Mammary epithelial cell (primary cell): ENCODE measurements at regions of chr12 and their contacts with region 1.

Region 1: GRCh38 chr12:19129486-19130223 is at the start of gene PLEKHA5:
- DNase-seq: peak; percentile 63
- H3K4me3 ChIP-seq: peak within 1 kb of the TSS; percentile 66 to 96 (median 67)
- H3K27ac ChIP-seq: peak within 1 kb of the TSS; percentile 78
- H3K4me1 ChIP-seq: peaks cover 13% of the 10 kb centered on the region
- H3K27me3 ChIP-seq: no peaks in the 10 kb centered on the region
- CTCF ChIP-seq: peak in 1 of 2 donors; percentile 55
- total RNA-seq, gene PLEKHA5: 54.3 to 76.5 TPM

Region 2: GRCh38 chr12:18261253-18261652 is 868.4 kb before region 1 on chr12 and contains the start of gene PIK3C2G:
- CTCF ChIA-PET with region 1: no interaction called
- dilution Hi-C with region 1: no loop called
- in situ Hi-C with region 1: no loop called
- intact Hi-C with region 1: loop called (anchors 10 kb)
- DNase-seq: peak; percentile 62
- H3K4me3 ChIP-seq: peak within 1 kb of the TSS; percentile 45 to 99 (median 66)
- H3K27ac ChIP-seq: peak within 1 kb of the TSS; percentile 97
- H3K4me1 ChIP-seq: peaks cover 7% of the 10 kb centered on the region
- H3K27me3 ChIP-seq: no peaks in the 10 kb centered on the region
- CTCF ChIP-seq: no peak
- total RNA-seq, gene PIK3C2G: 8.6 to 18.2 TPM

Region 3: GRCh38 chr12:18861287-18861858 is 268.3 kb before region 1 on chr12:
- CTCF ChIA-PET with region 1: interaction called, 3 read pairs
- dilution Hi-C with region 1: no loop called
- in situ Hi-C with region 1: loop called in 1 of 2 experiments (anchors 25 kb)
- intact Hi-C with region 1: loop called (anchors 1 kb)
- DNase-seq: peak; percentile 26
- H3K4me3 ChIP-seq: no peak overlapping the region
- H3K27ac ChIP-seq: no peak overlapping the region
- H3K4me1 ChIP-seq: peaks cover 15% of the 10 kb centered on the region
- H3K27me3 ChIP-seq: no peaks in the 10 kb centered on the region
- CTCF ChIP-seq: peak; percentile 56 to 76

Region 4: DNA sequence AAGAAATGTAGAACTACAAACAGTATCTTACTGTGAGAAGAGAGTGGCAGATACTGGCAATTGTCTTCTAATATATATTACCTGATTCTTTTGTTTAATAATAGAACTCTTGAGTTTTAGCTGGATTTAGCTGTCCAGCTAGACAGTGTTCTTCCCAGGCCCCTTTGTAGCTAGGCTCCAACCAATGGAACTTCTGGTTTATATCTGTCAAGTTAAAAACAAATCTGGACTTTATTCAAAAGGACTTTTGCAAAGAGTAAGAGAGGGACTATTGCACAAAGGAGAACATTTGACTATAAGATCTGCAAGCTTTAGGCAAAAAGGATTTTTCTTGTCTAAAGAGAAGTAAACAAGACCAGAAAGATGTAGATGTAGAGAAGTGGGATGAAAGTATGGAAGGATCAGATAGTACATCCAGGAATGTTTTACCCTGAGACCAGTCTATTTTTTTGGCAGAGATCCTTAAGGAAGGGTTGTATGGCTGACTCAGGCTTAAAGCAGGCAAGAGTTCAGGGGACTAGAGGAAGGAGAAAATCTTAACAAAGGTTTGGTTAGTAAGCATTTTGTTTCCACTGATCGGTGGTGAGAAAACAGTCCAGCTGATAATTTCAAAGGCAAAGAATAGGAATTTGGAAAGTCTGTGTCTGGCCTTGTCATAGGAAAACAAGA is 111.2 kb before region 1 on chr12:
- CTCF ChIA-PET with region 1: no interaction called
- dilution Hi-C with region 1: no loop called
- in situ Hi-C with region 1: no loop called
- intact Hi-C with region 1: loop called (anchors 5 kb)
- DNase-seq: peak; percentile 75
- H3K4me3 ChIP-seq: no peak overlapping the region
- H3K27ac ChIP-seq: peak overlapping the region; percentile 79
- H3K4me1 ChIP-seq: peaks cover 32% of the 10 kb centered on the region
- H3K27me3 ChIP-seq: no peaks in the 10 kb centered on the region
- CTCF ChIP-seq: no peak

Region 5: DNA sequence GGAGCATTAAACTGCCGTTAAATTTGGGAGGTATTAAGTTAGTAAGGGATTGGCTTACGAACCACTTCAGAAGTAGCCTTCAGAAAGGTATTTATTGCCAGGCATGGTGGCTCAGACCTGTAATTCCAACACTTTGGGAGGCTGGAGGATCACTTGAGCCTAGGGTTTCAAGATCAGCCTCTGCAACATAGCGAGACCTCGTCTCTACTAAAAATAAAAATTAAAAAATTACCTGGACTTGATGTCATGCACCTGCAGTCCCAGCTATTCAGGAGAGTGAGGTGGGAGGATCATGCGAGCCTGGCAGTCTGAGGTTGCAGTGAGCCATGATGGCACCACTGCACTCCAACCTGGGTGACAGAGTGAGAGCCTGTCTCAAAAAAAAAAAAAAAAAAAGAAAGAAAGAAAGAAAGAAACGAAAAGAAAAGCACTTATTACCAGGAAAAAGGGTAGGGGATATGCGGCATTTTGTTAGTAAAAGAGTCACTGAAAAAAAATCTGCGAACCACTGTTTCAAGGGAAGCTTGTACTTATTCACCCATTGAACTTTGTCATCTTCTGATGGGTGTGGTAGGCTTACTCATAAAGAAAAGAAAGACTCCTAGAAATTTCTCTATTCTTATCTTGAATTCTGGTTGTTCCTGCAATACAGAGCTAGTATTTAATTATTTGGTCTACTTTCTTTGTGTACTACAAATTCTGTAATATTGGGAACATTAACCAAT is 33.7 kb before region 1 on chr12:
- CTCF ChIA-PET with region 1: no interaction called
- dilution Hi-C with region 1: no loop called
- in situ Hi-C with region 1: no loop called
- intact Hi-C with region 1: loop called (anchors 2 kb)
- DNase-seq: peak; percentile 69
- H3K4me3 ChIP-seq: no peak overlapping the region
- H3K27ac ChIP-seq: peak overlapping the region; percentile 90
- H3K4me1 ChIP-seq: peaks cover 9% of the 10 kb centered on the region
- H3K27me3 ChIP-seq: no peaks in the 10 kb centered on the region
- CTCF ChIP-seq: no peak

Region 6: DNA sequence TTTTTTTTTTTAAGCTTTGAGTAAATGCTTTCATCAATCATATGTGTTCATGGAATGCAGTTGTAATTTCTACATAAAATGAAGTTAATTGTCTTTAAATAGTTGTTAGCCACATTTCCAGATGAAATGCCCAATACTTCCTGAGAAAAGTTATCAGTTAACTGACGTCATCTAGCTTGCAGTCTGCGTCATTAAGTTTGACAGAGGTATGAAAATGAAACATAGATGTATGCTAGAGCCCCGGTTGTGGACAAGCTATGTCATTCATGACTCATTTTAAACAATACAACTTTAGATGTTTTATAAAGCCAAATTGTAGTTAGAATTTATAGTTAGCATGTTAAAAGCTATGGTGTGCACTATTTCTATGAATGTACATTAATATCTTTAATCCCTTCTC is 90.5 kb after region 1 on chr12:
- CTCF ChIA-PET with region 1: no interaction called
- dilution Hi-C with region 1: no loop called
- in situ Hi-C with region 1: no loop called
- intact Hi-C with region 1: loop called (anchors 2 kb)
- DNase-seq: peak; percentile 63
- H3K4me3 ChIP-seq: no peak overlapping the region
- H3K27ac ChIP-seq: peak overlapping the region; percentile 68
- H3K4me1 ChIP-seq: peaks cover 19% of the 10 kb centered on the region
- H3K27me3 ChIP-seq: no peaks in the 10 kb centered on the region
- CTCF ChIP-seq: no peak